ENCODE measurements at regions of chr2 and their contacts with region 1.

Region 1: GRCh38 chr2:235116885-235117492 is 165.2 kb downstream of the SH3BP4 start:
- DNase-seq: peak in 1 of 2 experiments; percentile 55
- H3K4me3 ChIP-seq: no peak overlapping the region
- H3K27ac ChIP-seq: no peak overlapping the region
- H3K4me1 ChIP-seq: no peaks in the 10 kb centered on the region; the same call in 1 of the 2 replicates
- H3K27me3 ChIP-seq: no peaks in the 10 kb centered on the region
- CTCF ChIP-seq: peak; percentile 92

Region 2: DNA sequence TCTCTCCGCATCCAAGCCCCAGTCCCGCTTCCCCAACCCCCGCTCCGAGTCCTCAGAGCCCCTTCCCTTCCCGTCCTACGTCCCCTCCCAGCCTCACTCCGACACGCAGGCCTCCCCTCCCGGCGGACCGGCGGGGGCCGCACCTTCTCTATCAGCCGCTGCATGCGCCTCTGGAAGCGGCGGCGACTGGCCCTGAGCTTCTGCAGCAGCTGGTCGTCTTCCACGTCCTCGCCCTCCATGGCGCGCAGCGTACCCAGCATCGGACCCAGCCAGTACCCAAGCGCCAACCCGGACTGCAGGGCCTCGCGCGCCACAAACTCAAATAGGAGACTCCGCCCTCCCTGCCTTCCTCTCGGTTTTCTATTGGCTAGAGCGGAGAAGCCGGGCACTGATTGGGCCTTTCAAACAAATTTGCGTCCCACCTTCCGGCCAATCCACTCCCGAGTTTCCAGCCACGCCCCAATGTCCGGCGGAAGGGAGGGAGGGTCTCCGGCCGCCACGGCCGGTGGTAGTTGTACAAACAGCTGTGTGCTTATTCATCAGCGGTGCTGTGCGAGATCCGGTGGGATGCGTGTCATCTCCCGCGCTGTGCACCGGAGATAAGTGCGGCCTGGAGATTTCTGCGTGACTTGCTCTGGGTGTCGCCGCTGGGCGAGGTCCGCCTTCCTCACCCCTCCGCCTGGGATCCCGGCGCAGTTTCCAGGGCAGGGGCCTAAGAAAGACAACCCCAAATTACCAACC is 1262.6 kb before region 1 on chr2 and contains the start of gene HJURP:
- CTCF ChIA-PET with region 1: interaction called, 6 read pairs
- POLR2A ChIA-PET with region 1: no interaction called
- intact Hi-C with region 1: loop called (anchors 2 kb)
- DNase-seq: peak; percentile 95 to 98
- H3K4me3 ChIP-seq: peak within 1 kb of the TSS; percentile 100
- H3K27ac ChIP-seq: peak within 1 kb of the TSS; percentile 21; the same call in 1 of the 2 replicates
- H3K4me1 ChIP-seq: peaks cover 32% of the 10 kb centered on the region
- H3K27me3 ChIP-seq: no peaks in the 10 kb centered on the region
- CTCF ChIP-seq: no peak
- total RNA-seq, gene HJURP: 109 TPM in 2 replicates

Measured in PC-9 (cell line).